GM12878 (cell line): ENCODE measurements at regions of chr3 and their contacts with region 1.

Region 1: DNA sequence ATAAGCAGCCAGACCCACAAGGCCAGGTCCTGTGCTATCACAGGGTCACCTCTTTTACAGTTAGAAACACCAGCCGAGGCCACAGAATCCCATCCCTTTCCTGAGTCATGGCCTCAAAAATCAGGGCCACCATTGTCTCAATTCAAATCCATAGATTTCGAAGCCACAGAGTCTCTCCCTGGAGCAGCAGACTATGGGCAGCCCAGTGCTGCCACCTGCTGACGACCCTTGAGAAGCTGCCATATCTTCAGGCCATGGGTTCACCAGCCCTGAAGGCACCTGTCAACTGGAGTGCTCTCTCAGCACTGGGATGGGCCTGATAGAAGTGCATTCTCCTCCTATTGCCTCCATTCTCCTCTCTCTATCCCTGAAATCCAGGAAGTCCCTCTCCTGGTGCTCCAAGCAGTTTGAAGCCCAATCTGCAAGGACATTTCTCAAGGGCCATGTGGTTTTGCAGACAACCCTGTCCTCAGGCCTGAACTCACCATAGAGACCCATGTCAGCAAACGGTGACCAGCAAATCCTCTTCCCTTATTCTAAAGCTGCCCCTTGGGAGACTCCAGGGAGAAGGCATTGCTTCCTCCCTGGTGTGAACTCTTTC is 39.6 kb downstream of the TGM4 start:
- DNase-seq: no peak
- ATAC-seq: peak; percentile 98
- H3K4me3 ChIP-seq: no peak overlapping the region
- H3K27ac ChIP-seq: no peak overlapping the region
- H3K4me1 ChIP-seq: no peaks in the 10 kb centered on the region
- H3K27me3 ChIP-seq: no peaks in the 10 kb centered on the region; a peak in 1 of 4 replicates
- CTCF ChIP-seq: peak; percentile 82 to 86 (median 84)
- EP300 ChIP-seq: no peak
- POLR2A ChIP-seq: no peak
- RAD21 ChIP-seq: peak; percentile 73

Region 2: GRCh38 chr3:44529927-44530326 is 384.0 kb before region 1 on chr3:
- CTCF ChIA-PET with region 1: interaction called, 56 read pairs
- POLR2A ChIA-PET with region 1: no interaction called
- RAD21 ChIA-PET with region 1: interaction called, 23 read pairs
- SMC1A ChIA-PET with region 1: interaction called, 21 read pairs
- in situ Hi-C with region 1: loop called (anchors 5 kb)
- intact Hi-C with region 1: loop called (anchors 1 kb)
- DNase-seq: no peak
- ATAC-seq: peak; percentile 68
- H3K4me3 ChIP-seq: no peak overlapping the region
- H3K27ac ChIP-seq: no peak overlapping the region
- H3K4me1 ChIP-seq: no peaks in the 10 kb centered on the region
- H3K27me3 ChIP-seq: no peaks in the 10 kb centered on the region; a peak in 1 of 4 replicates
- CTCF ChIP-seq: peak; percentile 45 to 49 (median 45); a peak in 5 of 6 replicates
- EP300 ChIP-seq: no peak
- POLR2A ChIP-seq: no peak
- RAD21 ChIP-seq: peak; percentile 59

Region 3: DNA sequence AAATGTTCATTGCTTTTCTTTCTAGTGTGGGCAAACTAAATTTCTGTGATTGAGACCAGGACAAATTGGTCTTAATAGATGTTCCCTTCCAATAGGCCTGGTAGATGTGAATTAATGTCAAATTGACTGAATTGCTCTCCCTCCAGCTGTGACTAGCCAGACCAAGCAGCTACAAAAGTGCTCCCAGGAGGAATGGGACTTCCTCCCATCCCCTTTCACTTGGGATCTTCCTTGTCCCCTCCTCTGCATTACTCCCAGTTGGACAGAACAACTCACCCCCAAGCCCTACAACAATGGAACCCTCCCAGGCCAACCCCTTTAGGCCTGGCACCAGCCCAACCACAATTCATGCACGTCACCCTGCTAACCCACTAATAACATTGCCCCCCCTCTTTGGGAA is 378.6 kb before region 1 on chr3:
- CTCF ChIA-PET with region 1: interaction called, 56 read pairs
- POLR2A ChIA-PET with region 1: no interaction called
- RAD21 ChIA-PET with region 1: interaction called, 23 read pairs
- SMC1A ChIA-PET with region 1: interaction called, 21 read pairs
- in situ Hi-C with region 1: loop called (anchors 5 kb)
- intact Hi-C with region 1: loop called (anchors 1 kb)
- DNase-seq: no peak
- ATAC-seq: no peak
- H3K4me3 ChIP-seq: no peak overlapping the region
- H3K27ac ChIP-seq: no peak overlapping the region
- H3K4me1 ChIP-seq: no peaks in the 10 kb centered on the region
- H3K27me3 ChIP-seq: no peaks in the 10 kb centered on the region
- CTCF ChIP-seq: no peak
- EP300 ChIP-seq: no peak
- POLR2A ChIP-seq: no peak
- RAD21 ChIP-seq: no peak

Region 4: DNA sequence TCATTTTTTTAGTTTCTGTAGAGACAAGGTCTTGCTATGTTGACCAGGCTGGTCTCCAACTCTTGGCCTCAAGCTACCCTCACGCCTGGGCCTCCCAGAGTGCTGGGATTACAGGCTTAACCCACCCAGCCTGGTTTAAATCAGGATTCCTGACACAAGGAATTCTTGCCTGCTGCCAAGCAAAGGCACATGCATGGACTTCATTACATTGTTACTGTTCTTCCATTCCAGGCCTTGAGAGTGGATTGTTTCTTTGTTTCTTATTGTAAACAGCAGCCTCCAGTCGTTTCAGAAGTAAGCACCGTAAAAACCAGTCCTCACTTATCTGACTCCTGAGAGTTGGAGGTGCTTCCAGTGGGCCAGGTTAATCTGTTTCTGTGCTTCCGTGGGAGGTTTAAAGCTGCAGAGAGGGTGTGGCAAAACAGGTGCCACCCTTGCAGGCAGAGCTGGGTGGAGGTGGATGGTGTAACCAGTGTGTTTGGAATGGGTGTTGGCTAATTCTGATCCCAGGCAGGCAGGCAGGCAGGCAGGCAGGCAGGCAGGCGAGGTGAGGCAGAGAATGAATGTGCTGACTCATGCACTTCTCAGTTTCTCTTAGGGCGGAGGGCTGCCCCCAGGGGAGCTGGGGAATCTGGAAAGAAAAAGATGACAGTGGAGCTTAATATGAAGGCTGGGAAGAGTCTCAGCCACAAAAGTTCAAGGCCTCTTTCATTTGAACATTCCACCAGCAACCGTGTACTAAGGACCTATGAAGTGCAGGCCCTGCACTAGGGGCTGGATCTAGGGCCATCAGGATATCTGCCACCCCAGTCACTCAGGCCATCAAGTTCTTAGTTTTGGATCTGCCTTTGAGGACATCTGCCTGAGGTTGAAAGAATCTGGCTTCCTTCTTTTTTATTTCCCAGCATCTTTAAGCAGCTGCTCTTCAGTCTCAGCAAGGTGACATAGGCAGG is 269.2 kb after region 1 on chr3:
- CTCF ChIA-PET with region 1: no interaction called
- POLR2A ChIA-PET with region 1: no interaction called
- RAD21 ChIA-PET with region 1: no interaction called
- SMC1A ChIA-PET with region 1: no interaction called
- in situ Hi-C with region 1: no loop called
- intact Hi-C with region 1: no loop called
- DNase-seq: no peak
- ATAC-seq: peak; percentile 59
- H3K4me3 ChIP-seq: no peak overlapping the region
- H3K27ac ChIP-seq: no peak overlapping the region
- H3K4me1 ChIP-seq: no peaks in the 10 kb centered on the region; the same call in 1 of the 2 replicates
- H3K27me3 ChIP-seq: peaks cover 0 to 3% of the 10 kb centered on the region in 2 experiments; a peak in 2 of 4 replicates
- CTCF ChIP-seq: no peak
- EP300 ChIP-seq: no peak
- POLR2A ChIP-seq: no peak
- RAD21 ChIP-seq: no peak

Region 5: DNA sequence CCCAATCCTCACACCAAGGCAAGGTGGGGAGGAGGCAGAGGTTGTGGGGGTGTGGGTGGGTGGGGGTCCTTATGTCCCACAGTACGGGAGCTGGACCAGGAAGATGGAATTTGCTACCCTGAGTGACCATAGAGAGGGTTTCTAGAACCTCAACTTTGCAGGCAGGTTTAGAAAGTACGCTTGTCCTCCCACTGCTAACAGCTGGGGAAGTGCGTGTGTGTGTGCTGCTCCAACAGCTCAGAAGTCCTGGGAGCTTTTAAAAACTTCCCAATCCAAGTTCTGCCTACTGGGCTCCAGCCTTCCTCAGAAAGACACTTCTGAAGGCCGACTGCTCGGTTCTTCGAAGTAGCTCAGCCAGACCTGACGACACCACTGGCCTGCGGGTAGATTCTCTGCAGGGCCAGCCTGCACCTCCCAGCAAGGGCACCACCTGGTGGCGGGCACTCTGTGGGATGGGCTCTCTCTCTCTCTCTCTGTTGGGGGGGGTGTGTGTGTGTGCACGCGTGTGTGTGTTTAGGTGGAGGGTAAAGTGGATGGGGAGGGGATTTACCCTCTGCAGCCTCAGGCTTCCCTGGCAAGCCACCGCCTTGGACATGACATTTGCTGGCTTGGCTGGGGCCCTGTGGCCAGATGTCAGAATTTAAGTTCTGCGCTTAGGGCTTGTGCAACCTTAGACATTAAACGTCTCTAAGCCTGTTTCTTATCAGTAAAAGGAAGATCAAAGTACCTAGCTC is 296.5 kb after region 1 on chr3:
- CTCF ChIA-PET with region 1: no interaction called
- POLR2A ChIA-PET with region 1: no interaction called
- RAD21 ChIA-PET with region 1: no interaction called
- SMC1A ChIA-PET with region 1: no interaction called
- in situ Hi-C with region 1: no loop called
- intact Hi-C with region 1: no loop called
- DNase-seq: no peak
- ATAC-seq: peak; percentile 98
- H3K4me3 ChIP-seq: no peak overlapping the region
- H3K27ac ChIP-seq: no peak overlapping the region
- H3K4me1 ChIP-seq: no peaks in the 10 kb centered on the region
- H3K27me3 ChIP-seq: peaks cover 2 to 3% of the 10 kb centered on the region in 2 experiments; a peak in 3 of 4 replicates
- CTCF ChIP-seq: peak; percentile 60 to 75 (median 70); a peak in 5 of 6 replicates
- EP300 ChIP-seq: no peak
- POLR2A ChIP-seq: no peak
- RAD21 ChIP-seq: peak; percentile 44

Region 6: DNA sequence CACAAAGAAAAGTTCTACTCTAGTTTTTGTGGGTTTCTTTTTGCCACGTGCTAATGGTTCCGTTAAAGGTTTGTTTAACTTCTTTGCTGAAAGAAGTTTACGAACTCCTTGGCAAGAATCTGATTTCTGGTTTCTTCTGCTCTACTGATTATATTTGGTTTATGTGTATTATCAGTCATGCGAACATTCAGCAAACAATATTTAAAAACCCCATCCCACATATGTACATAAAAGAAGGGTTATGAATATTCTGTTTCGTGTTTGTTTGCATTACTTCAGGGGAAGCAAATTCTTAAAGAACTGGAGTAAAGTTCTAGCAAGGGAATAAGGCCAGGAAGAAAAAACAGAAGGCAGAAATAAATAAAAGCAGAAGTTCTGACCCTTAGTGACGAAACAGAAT is 484.2 kb after region 1 on chr3:
- CTCF ChIA-PET with region 1: no interaction called
- POLR2A ChIA-PET with region 1: no interaction called
- RAD21 ChIA-PET with region 1: no interaction called
- SMC1A ChIA-PET with region 1: no interaction called
- in situ Hi-C with region 1: no loop called
- intact Hi-C with region 1: no loop called
- DNase-seq: no peak
- ATAC-seq: no peak
- H3K4me3 ChIP-seq: no peak overlapping the region
- H3K27ac ChIP-seq: no peak overlapping the region
- H3K4me1 ChIP-seq: no peaks in the 10 kb centered on the region
- H3K27me3 ChIP-seq: no peaks in the 10 kb centered on the region
- CTCF ChIP-seq: no peak
- EP300 ChIP-seq: no peak
- POLR2A ChIP-seq: no peak
- RAD21 ChIP-seq: no peak